ENCODE measurements at regions of chr7 and their contacts with region 1.

Region 1: DNA sequence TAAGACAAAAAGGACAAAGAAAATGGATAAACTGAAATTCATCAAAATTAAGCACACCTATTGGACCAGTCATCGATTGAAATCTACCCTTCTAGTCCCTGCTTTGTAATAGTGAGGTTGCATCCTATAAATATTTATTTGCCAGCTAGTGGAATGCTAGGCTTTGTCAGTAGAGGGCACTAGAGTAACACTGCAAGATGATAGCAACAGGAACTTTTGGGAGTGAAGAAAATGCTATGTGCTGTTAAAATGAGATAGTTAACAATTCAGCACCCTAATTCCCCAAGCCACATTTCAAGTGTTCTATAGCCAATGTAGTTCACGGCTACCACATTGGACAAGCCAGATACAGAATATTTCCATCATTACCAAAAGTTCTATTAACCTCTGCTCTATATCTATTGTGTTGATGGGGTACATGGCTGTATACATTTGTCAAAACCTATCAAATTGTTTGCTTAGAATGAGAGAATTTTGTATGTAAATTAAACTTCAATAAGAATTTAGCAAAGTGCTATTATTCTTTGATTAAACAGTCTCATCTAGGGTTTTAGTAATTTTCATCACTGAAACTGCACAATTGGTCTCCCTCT is 69.8 kb downstream of the LSMEM1 start:
- DNase-seq: peak; percentile 28
- ATAC-seq: peak; percentile 42
- H3K4me3 Mint-ChIP-seq: no peak overlapping the region
- H3K27ac Mint-ChIP-seq: no peak overlapping the region
- H3K4me1 Mint-ChIP-seq: no peaks in the 10 kb centered on the region
- H3K27me3 Mint-ChIP-seq: peaks cover 10% of the 10 kb centered on the region

Region 2: GRCh38 chr7:112869111-112869757 is 318.7 kb after region 1 on chr7:
- CTCF ChIA-PET with region 1: interaction called, 7 read pairs
- POLR2A ChIA-PET with region 1: no interaction called
- intact Hi-C with region 1: loop called (anchors 1 kb)
- DNase-seq: peak; percentile 73
- ATAC-seq: peak; percentile 63
- H3K4me3 Mint-ChIP-seq: no peak overlapping the region
- H3K27ac Mint-ChIP-seq: no peak overlapping the region
- H3K4me1 Mint-ChIP-seq: peaks cover 19% of the 10 kb centered on the region
- H3K27me3 Mint-ChIP-seq: no peaks in the 10 kb centered on the region

Region 3: GRCh38 chr7:113289140-113289740 is 738.7 kb after region 1 on chr7:
- CTCF ChIA-PET with region 1: no interaction called
- POLR2A ChIA-PET with region 1: no interaction called
- intact Hi-C with region 1: loop called in 1 of 2 experiments (anchors 10 kb)
- DNase-seq: peak; percentile 16
- ATAC-seq: no peak
- H3K4me3 Mint-ChIP-seq: no peak overlapping the region
- H3K27ac Mint-ChIP-seq: no peak overlapping the region
- H3K4me1 Mint-ChIP-seq: no peaks in the 10 kb centered on the region
- H3K27me3 Mint-ChIP-seq: peaks cover 4% of the 10 kb centered on the region

Region 4: DNA sequence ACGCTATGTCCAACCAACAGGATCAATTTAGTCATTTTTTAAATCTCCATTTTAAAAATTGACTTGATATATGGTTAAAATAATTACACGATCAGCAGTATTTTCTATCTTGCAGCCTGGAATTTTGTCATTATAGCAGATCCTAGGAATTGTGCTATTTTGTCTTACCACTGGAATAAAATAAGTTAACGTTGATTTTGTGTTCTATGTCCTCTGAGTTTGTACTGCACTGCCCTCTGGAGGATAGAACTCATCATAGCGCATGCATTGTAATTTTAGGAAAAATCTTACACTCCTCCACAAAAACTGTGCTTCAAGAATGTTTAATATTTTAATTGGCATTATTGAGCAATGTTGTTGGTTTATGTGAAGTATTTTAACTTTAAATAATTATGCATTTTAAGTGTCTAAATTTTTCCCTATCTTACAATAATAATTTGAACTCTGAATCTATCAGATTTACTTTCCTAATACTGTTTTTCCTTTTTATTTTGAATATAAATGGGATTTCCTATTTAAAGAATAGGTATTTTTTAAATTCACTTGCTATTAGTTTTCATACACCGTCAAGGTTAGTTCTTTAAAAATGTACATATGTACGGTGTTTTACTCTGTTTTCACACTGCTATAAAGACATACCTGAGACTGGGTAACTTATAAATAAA is 1148.1 kb after region 1 on chr7:
- CTCF ChIA-PET with region 1: interaction called, 4 read pairs
- POLR2A ChIA-PET with region 1: no interaction called
- intact Hi-C with region 1: loop called in 1 of 2 experiments (anchors 5 kb)
- DNase-seq: no peak
- ATAC-seq: no peak
- H3K4me3 Mint-ChIP-seq: no peak overlapping the region
- H3K27ac Mint-ChIP-seq: no peak overlapping the region
- H3K4me1 Mint-ChIP-seq: no peaks in the 10 kb centered on the region
- H3K27me3 Mint-ChIP-seq: no peaks in the 10 kb centered on the region

Measured in activated CD4-positive, alpha-beta T cell treated with anti-CD3 and anti-CD28 coated beads for 36 hours (primary cell).